Activated CD4-positive, alpha-beta T cell treated with anti-CD3 and anti-CD28 coated beads for 36 hours (primary cell): ENCODE measurements at regions of chr2 and their contacts with region 1.

Region 1: DNA sequence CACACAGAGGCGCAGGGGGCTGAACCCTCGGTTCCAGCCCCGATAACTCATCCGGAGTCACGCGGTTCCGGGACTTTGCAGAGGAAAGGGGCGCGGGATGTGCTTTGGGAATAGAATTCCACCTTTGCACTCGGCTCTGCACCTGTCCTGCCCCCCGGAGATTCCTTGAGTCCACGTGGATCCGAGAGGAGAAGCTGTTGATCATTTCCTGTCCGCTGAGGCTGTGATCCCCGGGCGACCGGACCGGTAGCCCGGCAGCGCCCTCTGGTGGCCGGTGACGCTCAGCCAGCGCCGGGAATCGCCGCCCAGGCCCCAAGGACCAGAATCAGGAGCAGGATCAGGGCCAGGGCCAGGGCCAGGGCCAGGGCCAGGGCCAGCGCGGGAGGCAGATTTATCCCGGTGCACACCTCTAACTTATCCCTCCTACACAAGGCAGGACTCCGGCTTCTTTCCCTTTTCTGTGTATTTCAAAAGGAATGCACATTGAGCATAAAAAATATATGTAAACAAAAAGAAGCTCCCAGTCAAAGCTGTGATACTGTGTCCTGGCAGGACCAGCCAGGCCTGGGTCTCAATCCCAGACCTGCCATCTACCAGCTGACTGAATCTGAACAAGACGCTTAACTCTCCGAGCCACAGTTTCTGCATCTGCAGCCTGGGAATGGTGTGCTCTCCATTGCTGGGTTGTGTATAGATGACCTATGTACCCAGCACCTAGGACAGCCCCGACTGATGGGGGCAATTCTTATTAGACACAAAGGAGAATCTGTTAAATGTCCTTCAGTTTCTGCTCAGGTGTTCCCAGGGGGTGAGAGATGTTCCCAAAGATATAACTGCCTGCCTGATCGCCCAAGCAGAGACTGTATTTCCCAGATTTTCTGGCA is 8.5 kb upstream of the SPATA3 start:
- DNase-seq: peak; percentile 88
- ATAC-seq: peak; percentile 34
- H3K4me3 Mint-ChIP-seq: peak overlapping the region; percentile 67
- H3K27ac Mint-ChIP-seq: no peak overlapping the region
- H3K4me1 Mint-ChIP-seq: peaks cover 36% of the 10 kb centered on the region
- H3K27me3 Mint-ChIP-seq: peaks cover 16% of the 10 kb centered on the region

Region 2: GRCh38 chr2:229118336-229118735 is 1869.0 kb before region 1 on chr2:
- CTCF ChIA-PET with region 1: no interaction called
- POLR2A ChIA-PET with region 1: no interaction called
- intact Hi-C with region 1: no loop called
- DNase-seq: no peak
- ATAC-seq: no peak
- H3K4me3 Mint-ChIP-seq: no peak overlapping the region
- H3K27ac Mint-ChIP-seq: no peak overlapping the region
- H3K4me1 Mint-ChIP-seq: no peaks in the 10 kb centered on the region
- H3K27me3 Mint-ChIP-seq: no peaks in the 10 kb centered on the region

Region 3: GRCh38 chr2:230824406-230824978 is 162.9 kb before region 1 on chr2:
- CTCF ChIA-PET with region 1: interaction called, 35 read pairs
- POLR2A ChIA-PET with region 1: interaction called, 4 read pairs
- intact Hi-C with region 1: loop called (anchors 1 kb)
- DNase-seq: peak; percentile 62
- ATAC-seq: peak; percentile 87
- H3K4me3 Mint-ChIP-seq: peak overlapping the region; percentile 44
- H3K27ac Mint-ChIP-seq: no peak overlapping the region
- H3K4me1 Mint-ChIP-seq: peaks cover 5% of the 10 kb centered on the region
- H3K27me3 Mint-ChIP-seq: peaks cover 28% of the 10 kb centered on the region

Region 4: DNA sequence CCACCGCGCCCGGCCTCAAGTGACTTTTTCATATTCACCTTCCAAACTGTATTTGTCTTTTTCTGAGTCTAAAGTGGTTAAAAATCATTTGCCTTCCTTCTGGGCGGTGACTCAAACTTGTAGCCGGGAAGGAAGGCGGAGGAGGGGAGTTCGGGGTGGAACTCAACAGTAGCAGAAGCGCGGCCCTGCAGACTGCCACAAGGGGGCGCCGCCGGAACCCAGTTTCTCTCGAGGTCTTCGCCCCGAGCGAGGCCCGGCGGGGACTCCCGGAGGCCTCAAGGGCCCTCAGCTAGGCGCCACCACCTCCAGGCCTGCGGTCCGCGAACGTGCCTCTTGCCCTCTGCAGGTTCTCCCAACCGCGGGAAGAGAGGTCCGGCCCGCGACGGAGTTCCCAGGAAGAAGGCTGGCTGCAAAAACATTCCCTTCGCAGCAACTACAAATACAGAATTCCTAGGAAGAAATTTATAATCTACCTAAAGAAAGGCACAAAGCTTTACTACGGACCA is 139.4 kb before region 1 on chr2:
- CTCF ChIA-PET with region 1: interaction called, 17 read pairs
- POLR2A ChIA-PET with region 1: no interaction called
- intact Hi-C with region 1: loop called (anchors 1 to 2 kb)
- DNase-seq: peak; percentile 98
- ATAC-seq: peak; percentile 97
- H3K4me3 Mint-ChIP-seq: no peak overlapping the region
- H3K27ac Mint-ChIP-seq: peak overlapping the region; percentile 47
- H3K4me1 Mint-ChIP-seq: peaks cover 18% of the 10 kb centered on the region
- H3K27me3 Mint-ChIP-seq: peaks cover 19% of the 10 kb centered on the region

Region 5: GRCh38 chr2:230924470-230925341 is 62.7 kb before region 1 on chr2 and contains the start of gene GPR55:
- CTCF ChIA-PET with region 1: interaction called, 27 read pairs
- POLR2A ChIA-PET with region 1: interaction called, 10 read pairs
- intact Hi-C with region 1: loop called (anchors 1 kb)
- DNase-seq: peak; percentile 90
- ATAC-seq: peak; percentile 69
- H3K4me3 Mint-ChIP-seq: peak within 1 kb of the TSS; percentile 76
- H3K27ac Mint-ChIP-seq: peak within 1 kb of the TSS; percentile 95
- H3K4me1 Mint-ChIP-seq: peaks cover 66% of the 10 kb centered on the region
- H3K27me3 Mint-ChIP-seq: peaks cover 4% of the 10 kb centered on the region
- total RNA-seq, gene GPR55: 3.6 to 4.0 TPM

Region 6: DNA sequence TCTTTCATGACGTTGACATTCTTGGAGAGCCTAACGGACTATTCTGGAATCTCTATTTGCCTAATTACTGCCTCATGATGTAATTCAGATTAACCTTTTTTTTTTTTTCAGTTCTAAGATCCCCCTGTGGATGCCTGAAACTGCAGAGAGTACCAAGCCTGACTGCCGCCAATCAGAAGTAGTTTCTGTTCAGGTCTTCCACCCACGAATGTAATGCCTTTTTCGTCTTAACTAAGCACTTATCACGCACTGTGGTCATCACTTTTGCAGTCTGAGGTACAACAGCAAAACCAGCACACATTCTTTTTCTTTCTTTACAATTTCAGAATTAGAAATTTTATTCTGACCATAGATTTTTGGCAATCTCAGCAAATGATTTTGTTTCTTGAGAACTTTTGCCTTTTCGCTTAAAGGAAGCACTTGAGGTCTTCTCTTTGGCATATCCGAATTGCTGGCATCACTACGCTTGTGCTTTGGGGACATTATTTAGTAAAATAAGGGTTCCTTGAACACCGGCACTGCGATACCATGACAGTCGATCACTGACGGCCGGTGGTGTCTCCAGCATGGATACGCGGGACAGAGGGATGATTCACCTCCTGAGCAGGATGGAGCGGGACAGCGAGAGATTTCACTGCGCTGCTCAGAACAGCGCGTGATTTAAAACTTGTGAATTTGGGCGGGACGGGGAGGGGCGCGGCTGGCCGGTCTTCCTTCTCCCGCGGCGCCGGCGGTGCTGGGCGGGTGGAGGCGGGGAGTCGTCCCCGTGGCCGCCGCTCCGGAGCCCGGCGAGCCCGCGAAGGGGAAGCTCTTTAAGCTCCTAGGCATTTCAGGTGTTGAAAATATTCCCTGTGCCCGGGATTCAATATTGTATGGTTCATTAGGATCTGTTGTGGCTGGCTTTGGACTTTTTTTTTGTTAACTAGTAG is 30.3 kb before region 1 on chr2:
- CTCF ChIA-PET with region 1: interaction called, 9 read pairs
- POLR2A ChIA-PET with region 1: interaction called, 3 read pairs
- intact Hi-C with region 1: loop called (anchors 1 to 2 kb)
- DNase-seq: peak; percentile 64
- ATAC-seq: peak; percentile 81
- H3K4me3 Mint-ChIP-seq: peak overlapping the region; percentile 79
- H3K27ac Mint-ChIP-seq: peak overlapping the region; percentile 95
- H3K4me1 Mint-ChIP-seq: peaks cover 49% of the 10 kb centered on the region
- H3K27me3 Mint-ChIP-seq: peaks cover 47% of the 10 kb centered on the region

Region 7: DNA sequence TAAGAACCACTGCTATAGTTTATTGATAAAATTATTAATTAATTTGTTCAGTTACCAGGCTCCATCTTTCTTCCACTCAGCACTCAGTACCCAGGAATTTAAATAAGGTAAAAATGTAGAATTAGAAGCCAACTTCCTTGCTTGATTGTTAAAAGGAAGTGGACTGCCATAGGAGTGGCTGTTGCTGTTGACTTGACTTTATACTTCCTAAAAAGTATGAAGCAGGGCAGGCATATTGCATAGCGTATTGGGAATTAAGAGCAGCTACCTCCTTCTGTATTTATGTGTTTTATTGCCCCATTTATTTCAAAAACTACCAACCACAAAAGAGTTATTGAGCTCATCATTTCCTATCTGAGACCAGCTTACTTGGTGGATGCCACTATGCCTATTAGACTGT is 97.2 kb after region 1 on chr2:
- CTCF ChIA-PET with region 1: no interaction called
- POLR2A ChIA-PET with region 1: no interaction called
- intact Hi-C with region 1: no loop called
- DNase-seq: no peak
- ATAC-seq: no peak
- H3K4me3 Mint-ChIP-seq: no peak overlapping the region
- H3K27ac Mint-ChIP-seq: no peak overlapping the region
- H3K4me1 Mint-ChIP-seq: no peaks in the 10 kb centered on the region
- H3K27me3 Mint-ChIP-seq: no peaks in the 10 kb centered on the region